B cell (primary cell): ENCODE measurements at regions of chr18 and their contacts with region 1.

Region 1: DNA sequence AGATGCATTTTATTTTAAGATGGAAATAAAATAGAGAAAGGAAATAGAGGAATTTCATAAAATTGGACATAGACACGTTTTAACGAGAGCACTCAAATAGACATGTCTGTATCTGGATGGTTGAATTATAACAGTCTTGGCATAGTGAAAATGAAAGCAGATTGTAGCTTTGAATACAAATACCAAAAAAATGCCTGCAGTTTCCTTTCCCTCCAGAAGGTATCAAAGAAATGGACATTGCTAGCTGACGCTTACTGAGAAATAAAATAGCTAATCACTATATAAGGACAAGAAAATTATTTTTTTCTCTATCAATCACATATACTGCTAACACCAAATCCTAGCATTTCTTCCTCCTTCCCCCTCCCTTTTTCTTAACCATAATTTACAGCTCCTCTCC is 11.4 kb upstream of the MAPRE2 start:
- DNase-seq: peak; percentile 63
- ATAC-seq: peak; percentile 78
- H3K4me3 ChIP-seq: peak overlapping the region; percentile 44 to 80 (median 61)
- H3K4me3 Mint-ChIP-seq: peak overlapping the region; percentile 85
- H3K27ac ChIP-seq: peak overlapping the region; percentile 90 to 93
- H3K27ac Mint-ChIP-seq: peak overlapping the region; percentile 93
- H3K4me1 ChIP-seq: peaks cover 29 to 34% of the 10 kb centered on the region in 2 donors
- H3K4me1 Mint-ChIP-seq: peaks cover 44% of the 10 kb centered on the region
- H3K27me3 ChIP-seq: no peaks in the 10 kb centered on the region
- H3K27me3 Mint-ChIP-seq: no peaks in the 10 kb centered on the region
- CTCF ChIP-seq: peak; percentile 44

Region 2: GRCh38 chr18:35050028-35050546 is 20.3 kb after region 1 on chr18:
- CTCF ChIA-PET with region 1: interaction called, 36 read pairs
- POLR2A ChIA-PET with region 1: no interaction called
- intact Hi-C with region 1: no loop called
- DNase-seq: no peak
- ATAC-seq: peak; percentile 31
- H3K4me3 ChIP-seq: peak overlapping the region in 3 of 5 experiments; percentile 21 to 57 (median 27)
- H3K4me3 Mint-ChIP-seq: peak overlapping the region; percentile 83
- H3K27ac ChIP-seq: peak overlapping the region; percentile 85 to 87
- H3K27ac Mint-ChIP-seq: peak overlapping the region; percentile 88
- H3K4me1 ChIP-seq: peaks cover 50 to 55% of the 10 kb centered on the region in 2 donors
- H3K4me1 Mint-ChIP-seq: peaks cover 79% of the 10 kb centered on the region
- H3K27me3 ChIP-seq: no peaks in the 10 kb centered on the region
- H3K27me3 Mint-ChIP-seq: no peaks in the 10 kb centered on the region
- CTCF ChIP-seq: no peak

Region 3: DNA sequence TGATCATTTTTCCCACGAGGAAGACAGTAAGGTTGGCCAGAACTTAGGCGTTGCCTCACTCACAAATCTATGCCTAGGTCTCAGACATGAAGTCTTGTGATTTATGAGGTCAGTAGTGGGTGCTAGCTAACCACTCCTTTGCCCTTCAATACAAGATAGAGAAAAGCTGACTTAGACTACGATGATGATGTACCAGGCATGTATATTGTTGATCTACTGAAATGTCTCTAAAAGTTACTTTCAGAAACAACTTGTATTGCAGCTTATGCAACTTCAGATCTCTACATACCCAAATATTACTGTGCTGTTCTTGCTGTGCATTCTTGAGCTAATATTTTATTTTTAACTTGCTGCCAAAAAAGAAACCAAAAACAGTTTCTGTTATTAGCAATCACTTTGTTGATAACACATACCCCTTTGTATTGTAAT is 42.1 kb after region 1 on chr18:
- CTCF ChIA-PET with region 1: interaction called, 33 read pairs
- POLR2A ChIA-PET with region 1: no interaction called
- intact Hi-C with region 1: loop called (anchors 5 kb)
- DNase-seq: no peak
- ATAC-seq: no peak
- H3K4me3 ChIP-seq: no peak overlapping the region
- H3K4me3 Mint-ChIP-seq: no peak overlapping the region
- H3K27ac ChIP-seq: peak overlapping the region in 1 of 2 donors; percentile 65
- H3K27ac Mint-ChIP-seq: peak overlapping the region; percentile 42
- H3K4me1 ChIP-seq: peaks cover 10 to 17% of the 10 kb centered on the region in 2 donors
- H3K4me1 Mint-ChIP-seq: peaks cover 53% of the 10 kb centered on the region
- H3K27me3 ChIP-seq: no peaks in the 10 kb centered on the region
- H3K27me3 Mint-ChIP-seq: no peaks in the 10 kb centered on the region
- CTCF ChIP-seq: no peak

Region 4: DNA sequence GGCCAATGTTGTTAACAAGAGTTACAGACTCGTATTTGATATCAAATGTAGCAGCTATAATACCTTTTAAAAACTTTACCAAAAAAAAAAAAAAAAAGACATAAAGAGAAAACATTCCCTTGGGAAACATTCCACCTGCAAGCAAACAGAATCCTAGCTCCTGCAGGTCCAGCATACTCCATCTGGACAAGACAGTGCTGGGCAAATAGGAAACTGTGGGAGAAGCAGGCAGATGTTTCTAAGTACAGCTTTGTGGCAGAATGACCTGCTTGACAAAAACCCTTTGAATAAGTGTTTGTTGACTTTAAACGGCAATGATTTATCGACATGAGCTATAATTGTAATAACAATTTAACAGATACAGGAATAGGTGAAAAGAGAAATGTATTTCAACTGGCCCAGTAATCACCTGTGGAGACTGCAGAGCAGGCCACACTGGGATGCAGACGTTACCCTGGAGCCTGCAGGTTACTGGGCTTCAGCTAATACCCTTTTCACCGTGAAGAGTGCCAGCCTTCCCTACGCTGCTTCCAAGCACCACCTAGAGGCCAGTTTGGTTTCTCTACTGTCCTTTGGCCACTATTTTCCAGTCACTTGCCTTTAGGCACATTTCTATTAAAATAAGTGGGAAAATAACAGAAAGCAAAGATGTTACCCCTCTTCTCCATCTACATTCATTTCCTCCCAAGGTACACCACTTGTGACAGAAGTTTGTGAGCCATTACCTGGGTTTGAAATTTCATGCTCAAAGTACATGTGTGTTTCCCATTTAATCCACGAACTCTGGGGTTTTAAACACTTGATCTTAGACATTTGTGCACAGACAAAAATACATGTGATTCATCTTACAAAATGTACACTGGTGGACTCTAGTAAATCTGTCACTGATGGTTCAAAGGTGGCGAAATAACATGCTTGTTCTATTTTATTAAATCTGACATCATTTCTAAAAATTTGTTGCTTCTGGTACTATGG is 114.1 kb after region 1 on chr18:
- CTCF ChIA-PET with region 1: interaction called, 141 read pairs
- POLR2A ChIA-PET with region 1: no interaction called
- intact Hi-C with region 1: loop called (anchors 1 kb)
- DNase-seq: peak; percentile 52
- ATAC-seq: peak; percentile 67
- H3K4me3 ChIP-seq: no peak overlapping the region
- H3K4me3 Mint-ChIP-seq: no peak overlapping the region
- H3K27ac ChIP-seq: peak overlapping the region in 1 of 2 donors; percentile 31
- H3K27ac Mint-ChIP-seq: peak overlapping the region; percentile 6
- H3K4me1 ChIP-seq: peaks cover 24 to 28% of the 10 kb centered on the region in 2 donors
- H3K4me1 Mint-ChIP-seq: peaks cover 39% of the 10 kb centered on the region
- H3K27me3 ChIP-seq: no peaks in the 10 kb centered on the region
- H3K27me3 Mint-ChIP-seq: no peaks in the 10 kb centered on the region
- CTCF ChIP-seq: peak; percentile 55

Region 5: DNA sequence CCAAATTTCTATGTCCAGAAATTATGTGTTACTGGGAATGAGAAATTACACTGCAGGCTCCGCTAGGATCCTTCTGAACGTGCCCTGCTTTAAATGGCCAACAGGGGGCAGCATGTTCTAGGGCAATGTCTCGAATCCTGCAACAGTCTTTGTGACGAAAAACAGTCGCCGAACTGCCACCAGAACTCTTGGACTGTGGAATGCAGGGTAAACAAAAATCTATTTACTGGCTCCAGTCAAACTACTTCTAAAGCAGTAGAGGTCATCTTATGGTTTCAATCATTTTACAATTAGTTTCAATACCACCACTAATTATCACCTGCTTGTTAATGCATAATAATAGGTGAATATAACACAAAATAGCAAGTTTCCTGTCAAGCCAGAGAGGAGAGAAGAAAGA is 201.3 kb after region 1 on chr18:
- CTCF ChIA-PET with region 1: interaction called, 51 read pairs
- POLR2A ChIA-PET with region 1: no interaction called
- intact Hi-C with region 1: loop called (anchors 2 kb)
- DNase-seq: peak; percentile 86
- ATAC-seq: peak; percentile 88
- H3K4me3 ChIP-seq: peak overlapping the region in 1 of 5 experiments; percentile 31
- H3K4me3 Mint-ChIP-seq: peak overlapping the region; percentile 59
- H3K27ac ChIP-seq: no peak overlapping the region
- H3K27ac Mint-ChIP-seq: peak overlapping the region; percentile 10
- H3K4me1 ChIP-seq: no peaks in the 10 kb centered on the region
- H3K4me1 Mint-ChIP-seq: peaks cover 3% of the 10 kb centered on the region
- H3K27me3 ChIP-seq: no peaks in the 10 kb centered on the region
- H3K27me3 Mint-ChIP-seq: no peaks in the 10 kb centered on the region
- CTCF ChIP-seq: peak; percentile 99

Region 6: GRCh38 chr18:35355140-35355618 is 325.4 kb after region 1 on chr18:
- CTCF ChIA-PET with region 1: interaction called, 35 read pairs
- POLR2A ChIA-PET with region 1: no interaction called
- intact Hi-C with region 1: no loop called
- DNase-seq: peak; percentile 85
- ATAC-seq: peak; percentile 99
- H3K4me3 ChIP-seq: no peak overlapping the region
- H3K4me3 Mint-ChIP-seq: no peak overlapping the region
- H3K27ac ChIP-seq: no peak overlapping the region
- H3K27ac Mint-ChIP-seq: no peak overlapping the region
- H3K4me1 ChIP-seq: no peaks in the 10 kb centered on the region
- H3K4me1 Mint-ChIP-seq: no peaks in the 10 kb centered on the region
- H3K27me3 ChIP-seq: no peaks in the 10 kb centered on the region
- H3K27me3 Mint-ChIP-seq: no peaks in the 10 kb centered on the region
- CTCF ChIP-seq: peak; percentile 76